ENCODE measurements at regions of chr3 and their contacts with region 1.

Region 1: GRCh38 chr3:189041482-189042090 is 130.2 kb upstream of the TPRG1 start:
- DNase-seq: peak; percentile 72 to 82 (median 78)
- H3K4me3 ChIP-seq: no peak overlapping the region
- H3K4me3 Mint-ChIP-seq: no peak overlapping the region
- H3K27ac ChIP-seq: peak overlapping the region; percentile 52
- H3K27ac Mint-ChIP-seq: peak overlapping the region; percentile 8 to 87 (median 50)
- H3K4me1 ChIP-seq: peaks cover 7% of the 10 kb centered on the region
- H3K4me1 Mint-ChIP-seq: peaks cover 6 to 11% (median 8%) of the 10 kb centered on the region in 4 donors
- H3K27me3 ChIP-seq: no peaks in the 10 kb centered on the region
- H3K27me3 Mint-ChIP-seq: no peaks in the 10 kb centered on the region

Region 2: DNA sequence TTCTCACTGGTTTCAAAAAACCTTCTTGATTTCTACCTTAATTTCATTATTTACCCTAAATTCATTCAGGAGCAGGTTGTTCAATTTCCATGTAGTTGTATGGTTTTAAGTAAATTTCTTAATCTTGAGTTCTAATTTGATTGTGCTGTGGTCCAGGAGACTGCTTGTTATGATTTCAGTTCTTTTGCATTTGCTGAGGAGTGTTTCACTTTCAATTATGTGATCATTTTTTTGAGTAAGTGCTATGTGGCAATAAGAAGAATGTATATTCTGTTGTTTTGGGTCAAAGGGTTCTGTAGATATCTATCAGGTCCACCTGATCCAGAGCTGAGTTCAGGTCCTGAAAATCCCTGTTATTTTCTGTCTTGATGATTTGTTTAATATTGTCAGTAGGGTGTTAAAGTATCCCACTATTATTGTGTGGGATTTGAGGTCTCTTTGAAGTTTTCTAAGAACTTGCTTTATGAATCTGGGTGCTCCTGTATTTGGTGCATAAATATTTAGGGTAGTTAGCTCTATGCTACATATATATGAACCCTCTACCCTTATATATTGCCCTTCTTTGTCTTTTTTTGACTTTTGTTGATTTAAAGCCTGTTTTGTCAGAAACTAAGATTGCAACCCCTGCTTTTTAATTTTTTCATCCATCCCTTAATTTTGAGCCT is 28.2 kb before region 1 on chr3:
- CTCF ChIA-PET with region 1: no interaction called
- POLR2A ChIA-PET with region 1: no interaction called
- intact Hi-C with region 1: no loop called
- DNase-seq: no peak
- H3K4me3 ChIP-seq: no peak overlapping the region
- H3K4me3 Mint-ChIP-seq: peak overlapping the region in 1 of 8 donors; percentile 11
- H3K27ac ChIP-seq: no peak overlapping the region
- H3K27ac Mint-ChIP-seq: peak overlapping the region in 1 of 7 donors; percentile 20
- H3K4me1 ChIP-seq: peaks cover 8% of the 10 kb centered on the region
- H3K4me1 Mint-ChIP-seq: peaks cover 10 to 21% (median 12%) of the 10 kb centered on the region in 4 donors
- H3K27me3 ChIP-seq: no peaks in the 10 kb centered on the region
- H3K27me3 Mint-ChIP-seq: peaks cover 0 to 1% of the 10 kb centered on the region in 2 donors

Region 3: GRCh38 chr3:189027626-189028155 is 13.9 kb before region 1 on chr3:
- CTCF ChIA-PET with region 1: interaction called, 19 read pairs
- POLR2A ChIA-PET with region 1: interaction called, 4 read pairs
- intact Hi-C with region 1: no loop called
- DNase-seq: no peak
- H3K4me3 ChIP-seq: no peak overlapping the region
- H3K4me3 Mint-ChIP-seq: no peak overlapping the region
- H3K27ac ChIP-seq: no peak overlapping the region
- H3K27ac Mint-ChIP-seq: no peak overlapping the region
- H3K4me1 ChIP-seq: no peaks in the 10 kb centered on the region
- H3K4me1 Mint-ChIP-seq: peaks cover 0 to 4% (median 0%) of the 10 kb centered on the region in 4 donors
- H3K27me3 ChIP-seq: no peaks in the 10 kb centered on the region
- H3K27me3 Mint-ChIP-seq: peaks cover 4 to 5% of the 10 kb centered on the region in 2 donors

Region 4: GRCh38 chr3:189071441-189071840 is 29.9 kb after region 1 on chr3:
- CTCF ChIA-PET with region 1: interaction called, 13 read pairs
- POLR2A ChIA-PET with region 1: no interaction called
- intact Hi-C with region 1: no loop called
- DNase-seq: no peak
- H3K4me3 ChIP-seq: no peak overlapping the region
- H3K4me3 Mint-ChIP-seq: no peak overlapping the region
- H3K27ac ChIP-seq: no peak overlapping the region
- H3K27ac Mint-ChIP-seq: peak overlapping the region in 2 of 7 donors; percentile 9 to 57
- H3K4me1 ChIP-seq: no peaks in the 10 kb centered on the region
- H3K4me1 Mint-ChIP-seq: peaks cover 3 to 14% (median 8%) of the 10 kb centered on the region in 4 donors
- H3K27me3 ChIP-seq: no peaks in the 10 kb centered on the region
- H3K27me3 Mint-ChIP-seq: no peaks in the 10 kb centered on the region

Region 5: DNA sequence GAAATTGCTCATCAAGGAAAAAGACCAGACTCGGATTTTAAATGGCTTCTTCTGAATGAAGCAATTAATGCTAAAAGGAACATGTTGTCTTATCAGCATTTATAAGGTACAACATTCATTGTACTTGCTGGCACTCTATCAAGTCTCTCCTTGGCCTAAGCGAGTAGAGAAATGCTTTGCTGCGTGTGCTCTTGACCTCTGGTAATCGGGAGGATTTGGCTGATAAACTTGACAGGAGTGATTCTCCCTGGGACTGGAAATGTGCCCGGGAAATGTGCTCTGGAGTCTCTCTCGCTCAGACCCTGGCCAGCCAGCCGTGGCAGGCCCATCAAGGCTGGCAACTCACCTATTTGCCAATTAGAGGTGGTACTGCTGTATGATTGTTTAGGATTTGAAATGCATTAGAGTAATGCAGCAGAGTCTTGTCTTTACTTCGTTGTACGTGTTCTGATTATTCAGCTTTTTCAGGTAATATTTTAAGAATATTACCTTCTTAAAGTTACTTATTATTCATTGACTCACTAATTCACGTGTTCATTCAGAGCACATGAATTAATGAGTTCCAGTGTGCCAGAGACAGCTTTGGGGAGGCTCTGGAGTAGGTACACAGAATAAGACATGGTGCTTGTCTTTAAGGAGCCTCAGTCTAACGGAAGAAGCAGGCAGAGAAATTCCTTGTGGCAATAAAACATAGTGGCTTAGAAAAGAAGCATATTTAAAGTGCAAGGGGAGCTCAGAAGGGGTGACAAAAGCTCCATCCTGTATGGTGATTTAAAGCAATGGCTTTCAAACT is 82.2 kb after region 1 on chr3:
- CTCF ChIA-PET with region 1: interaction called, 21 read pairs
- POLR2A ChIA-PET with region 1: interaction called, 14 read pairs
- intact Hi-C with region 1: no loop called
- DNase-seq: no peak
- H3K4me3 ChIP-seq: no peak overlapping the region
- H3K4me3 Mint-ChIP-seq: peak overlapping the region in 6 of 8 donors; percentile 73 to 85 (median 78)
- H3K27ac ChIP-seq: no peak overlapping the region
- H3K27ac Mint-ChIP-seq: peak overlapping the region in 5 of 7 donors; percentile 7 to 93 (median 72)
- H3K4me1 ChIP-seq: peaks cover 45% of the 10 kb centered on the region
- H3K4me1 Mint-ChIP-seq: peaks cover 16 to 66% (median 34%) of the 10 kb centered on the region in 4 donors
- H3K27me3 ChIP-seq: no peaks in the 10 kb centered on the region
- H3K27me3 Mint-ChIP-seq: no peaks in the 10 kb centered on the region

Region 6: GRCh38 chr3:189304446-189305351 is 263.1 kb after region 1 on chr3:
- CTCF ChIA-PET with region 1: no interaction called
- POLR2A ChIA-PET with region 1: no interaction called
- intact Hi-C with region 1: no loop called
- DNase-seq: no peak
- H3K4me3 ChIP-seq: no peak overlapping the region
- H3K4me3 Mint-ChIP-seq: peak overlapping the region in 2 of 8 donors; percentile 7 to 9
- H3K27ac ChIP-seq: no peak overlapping the region
- H3K27ac Mint-ChIP-seq: peak overlapping the region in 3 of 7 donors; percentile 8 to 35 (median 8)
- H3K4me1 ChIP-seq: no peaks in the 10 kb centered on the region
- H3K4me1 Mint-ChIP-seq: peaks cover 4 to 14% (median 11%) of the 10 kb centered on the region in 4 donors
- H3K27me3 ChIP-seq: no peaks in the 10 kb centered on the region
- H3K27me3 Mint-ChIP-seq: no peaks in the 10 kb centered on the region